ENCODE measurements at regions of chr16 and their contacts with region 1.

Region 1: DNA sequence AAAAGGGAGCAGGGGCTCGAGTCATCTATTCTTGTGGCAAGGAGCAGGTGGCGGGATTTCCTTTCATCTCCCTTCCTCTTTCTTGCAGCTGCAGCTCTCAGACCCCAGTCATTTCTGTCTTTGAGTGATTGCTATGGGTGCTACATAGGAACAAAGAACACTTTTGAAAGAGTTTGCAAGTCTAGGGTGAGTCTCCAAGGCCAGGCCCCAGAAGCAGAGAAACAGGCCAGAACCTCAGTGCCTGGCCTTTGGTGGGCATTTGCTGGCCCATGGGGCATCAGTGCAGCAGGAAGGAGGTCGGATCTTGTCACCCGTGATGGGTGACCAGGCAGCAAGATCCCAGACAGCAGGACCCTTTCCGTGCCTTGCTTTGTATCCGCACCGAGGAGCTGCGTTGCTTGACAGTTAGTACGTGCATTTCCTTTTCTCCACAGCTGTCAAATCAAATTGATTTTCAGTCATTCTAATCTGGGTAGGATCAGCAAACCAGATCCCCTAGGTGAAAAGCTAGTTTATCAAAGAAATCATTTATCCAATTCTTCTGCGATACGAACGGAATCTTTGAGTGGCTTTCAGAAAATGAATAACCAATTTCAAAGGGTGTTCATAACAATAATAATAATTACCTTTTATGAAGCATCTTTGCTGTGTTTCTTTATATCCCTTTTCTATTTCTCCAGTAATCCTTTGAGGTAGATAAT is 244.6 kb upstream of the MAF start:
- DNase-seq: peak; percentile 61
- H3K4me3 Mint-ChIP-seq: peak overlapping the region; percentile 42
- H3K27ac Mint-ChIP-seq: peak overlapping the region; percentile 64
- H3K4me1 Mint-ChIP-seq: peaks cover 37% of the 10 kb centered on the region
- H3K27me3 Mint-ChIP-seq: no peaks in the 10 kb centered on the region

Region 2: DNA sequence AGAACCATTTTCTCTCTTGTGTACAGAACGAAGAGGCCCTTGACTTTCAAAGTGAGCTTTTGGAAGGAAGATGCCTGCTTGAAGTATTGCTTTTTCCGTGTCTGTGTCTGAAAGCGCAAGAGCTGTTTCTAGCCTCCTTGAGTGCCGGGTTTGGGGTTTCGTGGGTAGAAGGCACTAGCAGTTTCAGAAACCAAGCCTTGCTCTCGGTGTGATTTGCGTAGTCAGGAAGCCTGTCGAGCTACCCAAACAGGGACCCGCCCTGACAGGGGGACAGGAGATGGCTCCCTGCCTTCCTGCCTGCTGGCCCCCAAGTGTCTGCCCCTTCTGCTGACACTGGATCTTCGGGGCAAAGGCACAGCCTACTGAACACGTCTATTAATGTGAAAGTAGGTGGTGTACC is 566.7 kb before region 1 on chr16:
- intact Hi-C with region 1: loop called (anchors 10 kb)
- DNase-seq: peak; percentile 90
- H3K4me3 Mint-ChIP-seq: peak overlapping the region; percentile 74
- H3K27ac Mint-ChIP-seq: peak overlapping the region; percentile 85
- H3K4me1 Mint-ChIP-seq: peaks cover 62% of the 10 kb centered on the region
- H3K27me3 Mint-ChIP-seq: peaks cover 20% of the 10 kb centered on the region

Region 3: DNA sequence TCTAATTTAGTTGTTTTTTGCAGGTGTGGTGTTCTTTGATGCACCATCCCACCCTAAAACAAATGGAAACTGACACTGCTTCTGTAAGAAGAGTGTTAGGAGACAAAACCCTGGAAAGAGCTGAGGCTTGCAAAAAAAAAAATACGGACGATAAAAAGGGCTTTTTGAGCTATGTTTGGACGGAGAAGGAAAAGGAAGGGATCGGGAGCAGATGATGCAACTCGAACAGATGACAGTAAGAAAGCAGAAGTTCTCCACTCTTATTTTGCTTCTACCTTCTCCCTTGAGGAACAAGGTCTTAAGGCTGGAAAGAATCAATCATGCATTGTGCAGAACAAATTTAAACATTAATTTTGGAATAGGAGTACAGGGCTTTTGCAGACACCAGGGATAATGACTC is 381.3 kb before region 1 on chr16:
- intact Hi-C with region 1: no loop called
- DNase-seq: no peak
- H3K4me3 Mint-ChIP-seq: no peak overlapping the region
- H3K27ac Mint-ChIP-seq: no peak overlapping the region
- H3K4me1 Mint-ChIP-seq: no peaks in the 10 kb centered on the region
- H3K27me3 Mint-ChIP-seq: peaks cover 8% of the 10 kb centered on the region

Region 4: DNA sequence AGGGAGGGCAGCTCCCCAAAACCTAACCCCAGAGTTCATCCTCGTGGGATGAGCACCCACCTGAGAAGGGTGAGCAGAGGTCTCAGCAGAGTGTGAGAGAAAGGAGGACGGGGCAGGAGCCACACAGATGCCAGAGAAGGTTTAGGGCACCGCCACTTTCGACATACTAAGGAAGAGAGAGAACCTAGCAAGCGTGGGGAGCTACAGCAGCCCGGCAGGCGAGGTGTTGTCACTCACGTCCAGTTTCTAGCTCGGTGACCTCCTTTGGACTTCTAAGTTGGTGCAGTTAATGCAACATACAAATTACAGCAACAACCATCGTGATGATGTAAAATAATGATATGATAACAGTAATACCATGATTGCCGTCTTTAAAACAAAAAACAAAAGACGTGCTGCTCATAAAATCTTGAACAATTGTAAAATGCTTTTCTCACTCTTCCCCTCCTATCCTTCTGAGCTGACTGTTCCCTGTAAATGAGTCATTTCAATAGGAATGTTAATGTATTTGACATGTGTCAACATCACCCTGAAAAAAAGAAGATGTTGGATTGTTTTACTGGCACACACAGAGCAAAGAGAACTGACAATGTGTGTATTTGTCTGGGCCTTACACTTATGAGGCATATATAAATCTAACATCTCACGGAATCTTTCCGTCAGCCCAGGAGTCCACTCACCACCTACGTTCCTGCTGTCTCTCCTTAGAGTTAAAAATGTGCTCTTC is 86.4 kb before region 1 on chr16:
- intact Hi-C with region 1: loop called (anchors 5 kb)
- DNase-seq: no peak
- H3K4me3 Mint-ChIP-seq: no peak overlapping the region
- H3K27ac Mint-ChIP-seq: peak overlapping the region; percentile 4
- H3K4me1 Mint-ChIP-seq: peaks cover 26% of the 10 kb centered on the region
- H3K27me3 Mint-ChIP-seq: peaks cover 3% of the 10 kb centered on the region

Region 5: GRCh38 chr16:79912592-79913310 is 67.6 kb after region 1 on chr16:
- intact Hi-C with region 1: no loop called
- DNase-seq: no peak
- H3K4me3 Mint-ChIP-seq: no peak overlapping the region
- H3K27ac Mint-ChIP-seq: no peak overlapping the region
- H3K4me1 Mint-ChIP-seq: no peaks in the 10 kb centered on the region
- H3K27me3 Mint-ChIP-seq: peaks cover 2% of the 10 kb centered on the region

Region 6: GRCh38 chr16:79988721-79989215 is 143.6 kb after region 1 on chr16:
- intact Hi-C with region 1: no loop called
- DNase-seq: no peak
- H3K4me3 Mint-ChIP-seq: no peak overlapping the region
- H3K27ac Mint-ChIP-seq: no peak overlapping the region
- H3K4me1 Mint-ChIP-seq: no peaks in the 10 kb centered on the region
- H3K27me3 Mint-ChIP-seq: no peaks in the 10 kb centered on the region

Region 7: GRCh38 chr16:80599466-80599865 is 754.3 kb after region 1 on chr16:
- intact Hi-C with region 1: no loop called
- DNase-seq: no peak
- H3K4me3 Mint-ChIP-seq: no peak overlapping the region
- H3K27ac Mint-ChIP-seq: no peak overlapping the region
- H3K4me1 Mint-ChIP-seq: peaks cover 18% of the 10 kb centered on the region
- H3K27me3 Mint-ChIP-seq: peaks cover 4% of the 10 kb centered on the region